ENCODE measurements at regions of chr3 and their contacts with region 1.

Region 1: DNA sequence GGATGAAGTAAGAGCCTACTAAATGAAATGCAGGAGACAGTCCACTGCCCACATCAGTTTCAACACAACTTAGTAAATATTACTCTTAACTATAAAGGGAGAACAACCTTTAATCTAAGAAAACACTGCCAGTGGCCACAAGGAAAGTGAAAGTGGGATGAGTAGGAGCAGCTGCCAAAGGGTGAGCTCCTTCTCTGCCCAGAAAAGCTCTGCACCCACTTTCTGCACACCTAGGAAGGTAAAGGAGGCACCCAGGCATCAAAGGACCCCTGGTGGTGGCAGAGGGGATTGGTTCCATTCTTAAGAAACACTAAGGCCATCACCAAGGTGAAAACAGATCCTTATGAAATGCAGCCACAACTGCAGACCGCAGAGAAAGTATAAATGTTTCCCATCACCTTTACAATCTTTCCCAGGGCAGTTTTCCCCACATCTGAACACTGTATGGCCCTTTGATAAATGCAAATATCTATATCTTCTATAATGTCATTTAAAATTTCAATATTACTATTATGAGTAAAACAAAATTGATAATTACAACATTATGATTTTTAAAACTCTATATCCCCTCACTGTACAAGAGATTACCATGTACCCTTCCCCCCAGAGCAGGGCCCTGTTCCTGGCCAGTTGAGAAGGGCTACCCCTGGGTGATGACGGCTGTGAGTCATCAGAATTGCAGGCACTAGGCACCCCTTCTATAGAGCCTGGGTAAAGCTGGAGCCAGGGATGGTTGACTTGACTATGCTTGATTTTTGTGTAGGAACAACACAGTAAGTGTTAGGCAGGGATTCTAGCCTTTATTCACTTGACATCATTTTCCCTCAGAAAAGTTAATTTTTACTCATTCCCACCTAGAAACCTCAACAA is 92.0 kb downstream of the SNRK start:
- DNase-seq: peak in 1 of 2 donors; percentile 36
- ATAC-seq: peak in 1 of 2 donors; percentile 83
- H3K4me3 ChIP-seq: no peak overlapping the region
- H3K27ac ChIP-seq: peak overlapping the region in 3 of 4 donors; percentile 15 to 53 (median 33)
- H3K4me1 ChIP-seq: peaks cover 6 to 9% of the 10 kb centered on the region in 2 donors
- H3K27me3 ChIP-seq: no peaks in the 10 kb centered on the region
- CTCF ChIP-seq: peak; percentile 43 to 66 (median 60)
- POLR2A ChIP-seq: no peak

Region 2: DNA sequence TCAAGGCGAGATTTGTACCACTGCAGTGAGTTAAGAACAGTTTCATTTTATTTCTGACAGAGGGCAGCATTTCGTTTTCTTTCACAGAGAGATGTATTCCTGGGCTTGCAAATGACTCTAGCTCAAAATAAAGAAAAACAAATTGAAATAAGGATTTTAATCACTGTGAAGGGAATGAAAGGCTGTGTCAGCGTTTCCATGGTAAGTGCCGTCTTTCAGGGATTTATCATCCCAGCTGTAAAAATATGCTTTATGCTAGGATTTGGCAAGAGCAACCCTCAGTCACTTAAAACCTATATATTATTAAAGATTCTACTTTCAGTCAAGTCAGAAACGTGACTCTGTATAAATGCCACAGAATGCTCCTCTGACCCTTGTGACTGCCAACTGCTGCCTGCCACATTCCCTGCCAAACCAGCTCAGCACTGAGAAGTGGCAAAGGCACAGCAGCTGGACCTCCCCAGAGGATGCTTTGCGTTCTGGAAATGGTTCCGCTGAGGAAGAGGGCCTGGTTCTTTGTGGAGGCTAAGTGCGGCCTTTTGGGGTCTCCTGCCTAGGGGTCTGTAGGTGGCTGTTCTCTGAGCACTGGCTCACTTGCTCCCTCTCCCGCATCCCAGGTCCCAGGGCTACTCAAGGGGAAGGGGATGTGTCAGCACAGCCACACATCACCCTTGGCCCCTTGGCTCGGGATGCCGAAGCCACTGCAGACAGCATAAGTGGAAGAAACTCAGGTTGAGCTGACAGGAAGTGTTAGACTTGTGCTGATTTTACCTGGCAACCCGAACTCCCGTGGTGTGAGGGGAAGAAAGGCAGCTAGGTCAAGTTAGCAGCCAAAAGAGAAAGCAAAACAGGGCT is 215.8 kb before region 1 on chr3:
- in situ Hi-C with region 1: no loop called
- intact Hi-C with region 1: loop called (anchors 2 kb)
- DNase-seq: no peak
- ATAC-seq: no peak
- H3K4me3 ChIP-seq: no peak overlapping the region
- H3K27ac ChIP-seq: peak overlapping the region in 3 of 4 donors; percentile 6 to 43 (median 36)
- H3K4me1 ChIP-seq: peaks cover 0 to 7% of the 10 kb centered on the region in 2 donors
- H3K27me3 ChIP-seq: no peaks in the 10 kb centered on the region
- CTCF ChIP-seq: peak in 3 of 5 experiments; percentile 20 to 43 (median 35)
- POLR2A ChIP-seq: no peak

Measured in gastrocnemius medialis (tissue), 4 donors.